Heart right ventricle (tissue), 16 donors: ENCODE measurements at regions of chr18 and their contacts with region 1.

Region 1: GRCh38 chr18:53040286-53040685 is 700.3 kb downstream of the DCC start:
- DNase-seq: no peak
- ATAC-seq: no peak
- H3K4me3 ChIP-seq: no peak overlapping the region
- H3K27ac ChIP-seq: no peak overlapping the region
- H3K4me1 ChIP-seq: no peaks in the 10 kb centered on the region
- H3K27me3 ChIP-seq: no peaks in the 10 kb centered on the region
- CTCF ChIP-seq: no peak

Region 2: GRCh38 chr18:52536039-52536438 is 504.2 kb before region 1 on chr18:
- intact Hi-C with region 1: no loop called
- DNase-seq: no peak
- ATAC-seq: no peak
- H3K4me3 ChIP-seq: no peak overlapping the region
- H3K27ac ChIP-seq: no peak overlapping the region
- H3K4me1 ChIP-seq: no peaks in the 10 kb centered on the region
- H3K27me3 ChIP-seq: no peaks in the 10 kb centered on the region
- CTCF ChIP-seq: no peak

Region 3: GRCh38 chr18:52979892-52980291 is 60.4 kb before region 1 on chr18:
- intact Hi-C with region 1: loop called in 1 of 10 experiments (anchors 10 kb)
- DNase-seq: no peak
- ATAC-seq: no peak
- H3K4me3 ChIP-seq: no peak overlapping the region
- H3K27ac ChIP-seq: no peak overlapping the region
- H3K4me1 ChIP-seq: no peaks in the 10 kb centered on the region
- H3K27me3 ChIP-seq: no peaks in the 10 kb centered on the region
- CTCF ChIP-seq: no peak

Region 4: DNA sequence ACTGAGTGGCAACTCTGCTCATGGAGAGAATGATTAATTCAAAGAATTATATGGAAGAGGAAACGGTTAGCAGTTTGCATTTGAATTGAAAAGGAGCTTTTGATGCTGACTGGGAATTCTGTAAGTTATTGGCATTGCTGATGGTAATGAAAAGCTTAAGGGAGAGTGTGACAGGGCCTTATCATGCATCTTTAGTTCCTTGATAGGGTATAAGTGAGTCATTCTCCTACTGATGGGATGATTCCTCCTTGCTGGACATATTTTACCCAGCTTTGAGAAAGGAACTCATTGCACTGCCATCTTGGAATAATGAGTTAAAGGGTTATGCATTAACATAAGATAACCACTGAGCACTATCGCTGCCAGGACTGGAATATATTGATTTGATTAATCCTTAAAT is 40.4 kb after region 1 on chr18:
- intact Hi-C with region 1: no loop called
- DNase-seq: no peak
- ATAC-seq: no peak
- H3K4me3 ChIP-seq: no peak overlapping the region
- H3K27ac ChIP-seq: no peak overlapping the region
- H3K4me1 ChIP-seq: no peaks in the 10 kb centered on the region
- H3K27me3 ChIP-seq: no peaks in the 10 kb centered on the region
- CTCF ChIP-seq: no peak